ENCODE measurements at regions of chr18 and their contacts with region 1.

Region 1: DNA sequence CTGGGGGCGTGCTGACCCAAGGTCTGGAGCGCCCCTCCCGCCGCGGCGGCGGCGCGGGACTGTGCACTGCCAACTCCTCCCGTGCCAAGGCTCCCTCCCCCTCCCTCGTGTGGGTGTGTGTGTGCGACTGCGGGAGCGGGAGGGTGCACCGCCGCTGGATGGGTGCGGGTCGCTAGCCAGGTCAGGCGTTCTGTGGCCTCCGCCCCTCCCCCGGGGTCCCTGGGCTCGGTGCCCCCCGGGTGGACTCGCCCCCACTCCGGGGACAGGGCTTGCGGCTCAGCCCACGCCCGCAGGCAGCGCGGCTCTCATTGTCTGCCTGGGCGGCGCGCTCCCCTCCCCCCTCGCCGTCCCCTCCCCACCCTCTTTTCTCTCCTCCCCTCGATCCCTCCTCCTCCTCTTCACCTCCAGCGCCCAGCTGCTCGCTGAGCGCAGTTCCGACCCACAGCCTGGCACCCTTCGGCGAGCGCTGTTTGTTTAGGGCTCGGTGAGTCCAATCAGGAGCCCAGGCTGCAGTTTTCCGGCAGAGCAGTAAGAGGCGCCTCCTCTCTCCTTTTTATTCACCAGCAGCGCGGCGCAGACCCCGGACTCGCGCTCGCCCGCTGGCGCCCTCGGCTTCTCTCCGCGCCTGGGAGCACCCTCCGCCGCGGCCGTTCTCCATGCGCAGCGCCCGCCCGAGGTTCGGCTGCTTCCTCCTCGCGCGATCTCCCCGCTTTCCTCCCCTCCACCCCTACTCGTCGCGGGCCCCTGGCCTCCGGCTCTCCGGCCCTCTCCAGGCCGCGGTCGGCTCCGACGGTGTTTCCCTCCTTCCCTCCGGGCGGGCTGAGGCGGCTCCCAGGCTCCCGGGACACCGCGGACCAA is at the start of gene GATA6:
- DNase-seq: peak; percentile 94
- ATAC-seq: peak; percentile 75
- total RNA-seq, gene GATA6: 62.3 TPM

Region 2: GRCh38 chr18:21968338-21968737 is 200.9 kb before region 1 on chr18:
- intact Hi-C with region 1: no loop called
- DNase-seq: no peak
- ATAC-seq: no peak

Region 3: DNA sequence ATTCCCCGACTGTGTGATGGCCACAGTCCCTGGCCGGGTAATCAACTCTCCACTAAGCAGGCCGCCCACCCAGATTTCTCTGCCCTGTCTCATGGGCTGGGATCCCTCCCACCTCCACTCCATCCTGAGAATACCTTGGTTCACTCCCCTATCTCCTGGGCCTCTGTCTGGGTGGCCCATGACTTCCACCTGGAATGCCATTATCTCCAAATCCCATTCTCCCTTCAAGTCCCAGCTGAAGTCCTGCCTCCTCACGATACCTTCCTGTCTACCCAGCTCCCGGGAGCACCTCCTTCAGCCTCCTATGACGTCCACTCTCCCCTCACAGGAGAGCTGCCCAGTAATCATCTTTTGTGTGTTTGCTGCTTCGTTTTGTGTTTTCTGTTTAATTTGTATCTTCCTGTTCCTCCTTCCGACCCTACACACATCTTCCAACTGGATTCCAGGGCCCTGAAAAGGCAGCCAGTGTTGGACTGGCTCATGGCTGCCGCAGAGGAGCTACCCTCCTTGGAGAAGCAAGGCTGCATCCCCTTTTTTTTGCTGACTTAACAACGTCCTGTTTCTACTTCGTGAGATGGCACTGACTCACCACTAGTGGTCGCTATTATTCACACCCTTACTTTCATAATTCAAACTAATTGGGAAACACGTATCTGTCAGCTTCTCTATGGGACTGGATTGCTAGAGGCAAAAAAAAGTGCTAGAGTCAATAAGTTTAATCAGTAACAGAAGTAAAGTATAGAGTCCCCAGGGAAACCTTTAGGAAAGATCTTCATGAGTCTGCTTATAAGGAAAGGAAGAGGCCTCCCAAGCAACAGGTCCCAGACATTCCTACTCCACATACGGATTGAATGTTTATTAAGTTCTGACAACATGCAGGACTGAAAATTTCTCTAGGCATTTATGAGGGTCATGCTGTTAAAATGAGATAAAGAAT is 171.8 kb before region 1 on chr18:
- intact Hi-C with region 1: loop called (anchors 10 kb)
- DNase-seq: no peak
- ATAC-seq: peak; percentile 77

Region 4: GRCh38 chr18:22088029-22088428 is 81.2 kb before region 1 on chr18:
- intact Hi-C with region 1: no loop called
- DNase-seq: peak; percentile 61
- ATAC-seq: peak; percentile 62

Measured in left ventricle myocardium superior (tissue), 1 donor.